Activated CD8-positive, alpha-beta T cell treated with anti-CD3 and anti-CD28 coated beads, Interleukin-2, amount 10 ng/mL, durations not matched to agents 7 days and 5 days (primary cell): ENCODE measurements at regions of chr18 and their contacts with region 1.

Region 1: DNA sequence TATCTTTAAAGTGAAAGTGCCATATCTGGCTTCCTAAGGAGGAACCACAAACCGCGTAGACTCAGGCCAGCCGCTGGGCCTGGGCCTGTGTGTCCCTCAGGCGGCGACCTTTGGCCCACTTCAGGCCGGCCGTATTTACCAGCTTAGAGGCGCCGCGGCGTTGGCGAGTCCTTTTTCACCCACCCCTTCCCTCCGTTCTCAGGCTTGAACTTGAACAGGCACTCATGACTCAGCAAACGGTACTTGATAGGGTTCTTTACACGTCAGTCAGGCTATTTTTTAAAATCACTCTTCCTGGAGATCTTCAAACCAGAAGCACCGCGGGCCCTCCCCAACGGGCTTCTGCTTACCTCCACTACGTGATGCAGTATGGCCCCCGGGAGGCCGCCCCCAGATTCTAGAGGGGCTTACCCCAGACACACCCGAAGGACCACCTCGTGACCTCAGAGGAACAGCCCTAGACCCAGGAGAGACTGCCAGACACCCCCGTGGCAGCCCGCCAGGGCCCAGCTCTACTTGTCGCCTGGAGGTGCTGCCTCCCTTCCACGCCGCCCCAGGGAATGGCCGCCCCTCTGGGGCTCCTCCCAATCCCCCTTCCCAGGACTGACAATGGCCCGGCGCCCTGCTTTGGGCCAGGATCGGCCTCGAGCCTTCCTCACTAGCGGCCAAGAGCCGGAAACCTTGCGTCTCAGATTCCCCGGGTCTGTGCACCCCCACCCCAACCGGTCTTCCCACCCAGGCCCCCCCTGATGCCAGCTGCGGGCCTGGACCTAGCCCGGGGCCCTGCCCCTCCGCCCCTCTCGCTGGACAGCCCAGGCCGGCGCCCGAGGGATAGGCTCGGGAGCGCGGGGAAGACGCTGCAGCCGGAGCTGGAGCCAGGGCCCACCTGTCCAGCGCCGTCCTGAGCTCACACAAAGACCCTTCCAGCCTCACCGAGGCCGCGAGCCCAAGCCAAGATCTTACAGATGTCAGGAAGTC is 33.8 kb upstream of the IMPA2 start:
- DNase-seq: peak; percentile 70
- ATAC-seq: peak; percentile 84
- H3K4me3 Mint-ChIP-seq: peak overlapping the region; percentile 59
- H3K27ac Mint-ChIP-seq: peak overlapping the region; percentile 28
- H3K4me1 Mint-ChIP-seq: peaks cover 18% of the 10 kb centered on the region
- H3K27me3 Mint-ChIP-seq: no peaks in the 10 kb centered on the region

Region 2: DNA sequence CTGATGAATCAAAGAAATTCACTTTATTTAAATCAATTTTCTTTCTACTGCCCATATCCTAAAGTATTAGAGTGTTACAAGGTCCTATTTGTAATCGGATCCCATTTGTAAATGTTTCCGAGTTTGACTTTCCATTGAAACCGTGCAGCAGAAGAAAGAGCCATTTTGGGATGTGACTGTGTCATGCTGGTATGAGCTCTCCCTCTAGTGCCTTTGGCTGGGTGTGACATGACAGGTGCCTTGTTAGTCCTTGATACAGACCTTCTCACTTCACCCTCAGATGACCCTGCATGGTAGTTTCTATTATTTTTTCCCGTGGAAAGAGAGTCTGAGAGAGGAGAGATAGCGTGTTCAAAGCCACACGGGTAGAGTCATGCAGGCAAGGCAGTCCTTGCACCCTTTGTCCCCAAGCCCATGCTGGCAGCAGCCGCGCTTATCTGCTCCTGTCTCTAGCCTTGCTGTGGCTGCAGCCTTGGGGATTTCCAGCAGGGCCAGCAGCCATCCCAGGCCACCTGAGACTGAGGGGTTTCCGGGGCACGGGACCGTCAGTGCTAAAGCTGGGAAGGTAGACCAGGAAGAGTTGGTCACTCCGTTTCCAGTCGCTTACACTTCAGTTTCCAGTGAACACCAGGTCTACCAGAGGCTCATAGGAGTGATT is 74.9 kb before region 1 on chr18:
- CTCF ChIA-PET with region 1: no interaction called
- POLR2A ChIA-PET with region 1: no interaction called
- DNase-seq: no peak
- ATAC-seq: no peak
- H3K4me3 Mint-ChIP-seq: no peak overlapping the region
- H3K27ac Mint-ChIP-seq: no peak overlapping the region
- H3K4me1 Mint-ChIP-seq: no peaks in the 10 kb centered on the region
- H3K27me3 Mint-ChIP-seq: no peaks in the 10 kb centered on the region

Region 3: DNA sequence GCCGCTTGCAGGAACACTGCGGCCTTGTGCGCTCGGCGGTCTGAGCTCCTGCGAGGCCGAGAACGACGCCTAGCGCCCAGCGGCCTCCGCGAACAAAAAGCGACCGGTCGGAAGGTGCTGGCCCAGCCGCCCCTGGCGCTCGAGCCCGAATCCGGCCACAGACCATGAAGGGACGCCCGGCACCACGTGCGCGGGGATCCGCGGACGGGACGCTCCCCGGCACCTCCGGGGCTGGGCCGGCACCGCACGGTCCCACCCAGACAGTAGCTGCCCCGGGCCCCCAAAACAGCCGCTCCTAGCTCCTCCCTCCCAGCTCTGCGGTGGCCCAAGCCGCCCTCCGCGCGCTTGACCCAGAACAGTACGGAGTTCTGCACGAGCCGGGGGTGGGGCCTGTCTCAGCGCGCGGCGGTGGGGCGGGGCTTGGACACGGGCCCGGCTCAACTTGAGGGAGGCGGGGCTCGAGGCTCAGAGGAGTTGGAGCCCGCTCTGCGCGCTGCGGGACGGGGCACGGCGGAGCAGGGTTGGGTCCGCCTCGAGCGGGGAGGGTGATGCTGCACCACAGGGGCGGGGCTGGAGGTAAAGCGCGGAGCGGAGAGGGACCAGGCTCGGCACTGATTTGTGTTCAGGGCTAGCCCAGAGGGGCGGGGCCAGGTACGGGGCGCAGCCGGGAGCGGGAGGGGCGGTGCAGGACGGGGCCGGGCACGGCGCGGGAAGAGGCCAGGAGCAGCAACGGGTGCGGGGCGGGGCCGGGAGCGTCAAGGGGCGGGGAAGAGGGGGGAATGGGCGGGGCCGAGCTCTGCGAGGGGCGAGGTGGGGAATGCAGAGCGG is 33.3 kb after region 1 on chr18:
- CTCF ChIA-PET with region 1: interaction called, 4 read pairs
- POLR2A ChIA-PET with region 1: interaction called, 10 read pairs
- DNase-seq: peak; percentile 98
- ATAC-seq: peak; percentile 94
- H3K4me3 Mint-ChIP-seq: peak overlapping the region; percentile 87
- H3K27ac Mint-ChIP-seq: peak overlapping the region; percentile 78
- H3K4me1 Mint-ChIP-seq: peaks cover 17% of the 10 kb centered on the region
- H3K27me3 Mint-ChIP-seq: peaks cover 3% of the 10 kb centered on the region

Region 4: GRCh38 chr18:12038639-12039417 is 91.3 kb after region 1 on chr18:
- CTCF ChIA-PET with region 1: interaction called, 20 read pairs
- POLR2A ChIA-PET with region 1: no interaction called
- DNase-seq: peak; percentile 77
- ATAC-seq: peak; percentile 93
- H3K4me3 Mint-ChIP-seq: peak overlapping the region; percentile 40
- H3K27ac Mint-ChIP-seq: no peak overlapping the region
- H3K4me1 Mint-ChIP-seq: peaks cover 1% of the 10 kb centered on the region
- H3K27me3 Mint-ChIP-seq: peaks cover 16% of the 10 kb centered on the region